ENCODE measurements at regions of chr3 and their contacts with region 1.

Region 1: GRCh38 chr3:44477312-44478030 is at the start of gene ZNF445:
- DNase-seq: peak; percentile 14 to 90
- H3K4me3 ChIP-seq: peak within 1 kb of the TSS; percentile 74 to 90
- H3K27ac ChIP-seq: peak within 1 kb of the TSS; percentile 42 to 68
- H3K4me1 ChIP-seq: peaks cover 0 to 13% of the 10 kb centered on the region in 2 donors
- H3K27me3 ChIP-seq: no peaks in the 10 kb centered on the region
- CTCF ChIP-seq: no peak
- total RNA-seq, gene ZNF445: 6.6 TPM

Region 2: DNA sequence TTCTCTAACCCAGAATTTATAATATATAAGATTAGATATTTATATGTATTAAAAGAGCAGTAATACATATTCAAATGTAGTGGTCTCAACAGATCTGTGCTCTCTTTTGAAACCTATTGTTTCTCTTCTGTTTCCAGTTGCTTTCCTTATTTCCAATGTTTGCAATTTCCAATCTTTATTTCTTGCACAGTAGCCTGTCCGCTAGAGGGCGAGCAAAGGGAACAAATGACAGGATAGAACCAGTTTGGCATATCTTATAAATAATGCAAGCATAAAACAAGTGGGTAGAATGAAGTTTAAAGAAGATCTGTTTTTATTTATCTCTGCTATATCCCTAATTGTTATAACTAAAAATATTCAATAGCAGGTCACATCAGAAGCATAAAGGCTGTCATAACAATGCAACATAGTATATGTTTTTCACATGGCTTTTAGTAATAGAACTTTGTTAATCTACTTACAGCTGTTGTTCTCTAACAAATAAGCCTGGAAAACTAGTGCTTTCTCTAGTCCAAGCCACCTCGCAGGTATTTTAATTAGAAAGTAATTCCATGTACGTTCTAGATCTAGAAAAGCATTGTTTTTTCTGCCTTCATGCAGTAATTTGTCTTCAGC is 154.0 kb before region 1 on chr3:
- intact Hi-C with region 1: loop called (anchors 1 kb)
- DNase-seq: peak in 1 of 2 donors; percentile 84
- H3K4me3 ChIP-seq: no peak overlapping the region
- H3K27ac ChIP-seq: no peak overlapping the region
- H3K4me1 ChIP-seq: no peaks in the 10 kb centered on the region
- H3K27me3 ChIP-seq: no peaks in the 10 kb centered on the region
- CTCF ChIP-seq: peak; percentile 47 to 88 (median 77)

Region 3: DNA sequence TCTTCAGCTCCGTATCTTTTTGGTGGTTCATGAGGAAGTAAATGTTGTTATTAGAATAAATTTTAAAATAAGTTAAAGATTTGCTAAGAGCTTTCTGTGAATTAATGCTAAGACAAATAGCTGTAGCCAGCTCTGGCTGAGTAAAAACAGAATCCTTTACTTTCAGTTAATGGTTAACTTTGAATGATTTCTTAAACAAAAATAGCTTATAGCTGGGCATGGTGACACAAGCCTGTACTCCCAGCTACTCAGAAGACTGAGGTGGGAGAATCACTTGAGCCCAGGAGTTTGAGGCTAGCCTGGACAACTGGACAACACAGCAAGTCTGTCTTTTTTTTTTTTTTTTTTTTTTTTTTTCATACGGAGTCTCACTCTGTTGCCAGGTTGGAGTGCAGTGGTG is 113.9 kb before region 1 on chr3:
- intact Hi-C with region 1: no loop called
- DNase-seq: no peak
- H3K4me3 ChIP-seq: no peak overlapping the region
- H3K27ac ChIP-seq: no peak overlapping the region
- H3K4me1 ChIP-seq: no peaks in the 10 kb centered on the region
- H3K27me3 ChIP-seq: no peaks in the 10 kb centered on the region
- CTCF ChIP-seq: no peak

Region 4: DNA sequence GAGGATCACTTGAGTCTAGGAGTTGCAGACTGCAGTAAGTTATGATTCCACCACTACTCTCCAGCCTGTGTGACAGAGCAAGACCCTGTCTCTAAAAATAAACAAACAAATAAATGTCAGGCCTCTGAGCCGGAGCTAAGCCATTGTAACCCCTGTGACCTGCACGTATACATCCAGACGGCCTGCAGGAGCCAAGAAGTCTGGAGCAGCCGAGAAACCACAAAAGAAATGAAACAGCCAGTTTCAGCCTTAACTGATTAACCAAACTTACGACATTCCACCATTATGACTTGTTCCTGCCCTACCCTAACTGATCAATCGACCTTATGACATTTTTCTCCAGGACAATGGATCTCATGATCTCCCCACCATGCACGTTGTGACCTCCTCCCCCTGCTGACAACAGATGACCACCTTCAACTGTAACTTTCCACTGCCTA is 45.0 kb after region 1 on chr3:
- intact Hi-C with region 1: no loop called
- DNase-seq: no peak
- H3K4me3 ChIP-seq: no peak overlapping the region
- H3K27ac ChIP-seq: no peak overlapping the region
- H3K4me1 ChIP-seq: no peaks in the 10 kb centered on the region
- H3K27me3 ChIP-seq: no peaks in the 10 kb centered on the region
- CTCF ChIP-seq: no peak

Measured in ascending aorta (tissue), 2 donors.